Psoas muscle (tissue), 8 donors: ENCODE measurements at regions of chr1 and their contacts with region 1.

Region 1: GRCh38 chr1:32666901-32667566 is 16.0 kb downstream of the RBBP4 start:
- DNase-seq: no peak
- ATAC-seq: no peak
- H3K4me3 ChIP-seq: no peak overlapping the region
- H3K27ac ChIP-seq: no peak overlapping the region
- H3K4me1 ChIP-seq: no peaks in the 10 kb centered on the region
- H3K27me3 ChIP-seq: no peaks in the 10 kb centered on the region
- CTCF ChIP-seq: no peak

Region 2: GRCh38 chr1:32536117-32536516 is 130.9 kb before region 1 on chr1:
- intact Hi-C with region 1: no loop called
- DNase-seq: no peak
- ATAC-seq: no peak
- H3K4me3 ChIP-seq: no peak overlapping the region
- H3K27ac ChIP-seq: no peak overlapping the region
- H3K4me1 ChIP-seq: peaks cover 17% of the 10 kb centered on the region
- H3K27me3 ChIP-seq: no peaks in the 10 kb centered on the region
- CTCF ChIP-seq: no peak

Region 3: DNA sequence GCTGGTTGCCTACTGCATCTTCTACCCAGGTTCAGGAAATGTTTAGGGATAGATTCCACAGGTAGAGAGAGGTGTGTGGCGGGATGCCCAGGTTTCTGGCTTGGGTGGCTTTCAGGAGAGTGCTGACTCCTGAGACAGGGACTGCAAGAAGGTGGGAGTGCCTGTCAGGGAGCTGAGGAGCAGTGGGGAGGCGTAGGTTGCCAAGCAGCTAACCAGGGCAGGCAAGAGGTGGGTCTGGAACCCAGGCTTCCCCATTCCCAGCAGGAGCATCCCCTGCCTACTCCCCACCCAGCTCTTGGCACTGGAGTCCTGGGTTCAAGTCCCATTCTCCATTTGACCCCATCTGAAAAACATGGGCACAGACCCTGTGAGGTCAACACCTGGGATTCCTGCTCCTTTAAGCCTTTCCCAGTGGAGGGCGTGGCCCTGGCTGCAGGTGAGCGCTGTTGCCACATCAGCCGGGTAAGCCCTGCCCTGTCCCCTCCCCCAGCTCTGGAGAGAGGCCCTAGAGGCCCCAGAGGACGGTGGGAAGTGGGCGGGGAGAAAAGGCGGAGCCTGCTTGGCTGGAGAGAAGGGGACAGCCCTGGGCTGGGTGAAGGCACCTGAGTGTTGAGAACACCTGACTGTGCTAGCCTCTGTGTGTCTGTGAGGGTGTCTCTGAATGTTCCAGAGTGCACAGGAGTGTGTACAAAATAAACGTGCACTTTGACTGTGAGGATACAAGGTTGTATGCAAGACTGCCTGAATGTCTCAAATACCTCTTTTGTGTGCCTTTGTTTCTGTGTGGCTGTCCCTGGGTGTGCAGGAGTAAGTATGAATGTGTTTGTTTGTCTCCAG is 49.5 kb after region 1 on chr1:
- intact Hi-C with region 1: no loop called
- DNase-seq: peak; percentile 42 to 68
- ATAC-seq: peak; percentile 48 to 71 (median 56)
- H3K4me3 ChIP-seq: no peak overlapping the region
- H3K27ac ChIP-seq: no peak overlapping the region
- H3K4me1 ChIP-seq: no peaks in the 10 kb centered on the region
- H3K27me3 ChIP-seq: no peaks in the 10 kb centered on the region
- CTCF ChIP-seq: no peak

Region 4: GRCh38 chr1:32779242-32779641 is 112.2 kb after region 1 on chr1:
- intact Hi-C with region 1: loop called in 1 of 2 experiments (anchors 2 kb)
- DNase-seq: no peak
- ATAC-seq: no peak
- H3K4me3 ChIP-seq: no peak overlapping the region
- H3K27ac ChIP-seq: no peak overlapping the region
- H3K4me1 ChIP-seq: no peaks in the 10 kb centered on the region
- H3K27me3 ChIP-seq: no peaks in the 10 kb centered on the region
- CTCF ChIP-seq: no peak

Region 5: GRCh38 chr1:32828341-32828740 is 161.3 kb after region 1 on chr1:
- intact Hi-C with region 1: no loop called
- DNase-seq: no peak
- ATAC-seq: no peak
- H3K4me3 ChIP-seq: no peak overlapping the region
- H3K27ac ChIP-seq: no peak overlapping the region
- H3K4me1 ChIP-seq: no peaks in the 10 kb centered on the region
- H3K27me3 ChIP-seq: no peaks in the 10 kb centered on the region
- CTCF ChIP-seq: no peak